Mucosa of descending colon (tissue), 3 donors: ENCODE measurements at regions of chr12 and their contacts with region 1.

Region 1: GRCh38 chr12:123232807-123233543 is at the starts of genes MPHOSPH9 and MTRFR:
- DNase-seq: peak; percentile 98 to 99 (median 98)
- ATAC-seq: peak; percentile 98
- H3K4me3 ChIP-seq: peak within 1 kb of the TSS; percentile 58
- H3K4me1 ChIP-seq: peaks cover 20% of the 10 kb centered on the region
- CTCF ChIP-seq: peak; percentile 8
- total RNA-seq, gene MPHOSPH9: 19.6 to 28.7 (median 19.8) TPM
- total RNA-seq, gene MTRFR: 9.0 to 11.2 (median 10.4) TPM

Region 2: GRCh38 chr12:122860346-122861090 is 372.5 kb before region 1 on chr12:
- intact Hi-C with region 1: loop called in 1 of 2 experiments (anchors 10 kb)
- DNase-seq: peak; percentile 89 to 93 (median 90)
- ATAC-seq: peak; percentile 66
- H3K4me3 ChIP-seq: no peak overlapping the region
- H3K4me1 ChIP-seq: peaks cover 18% of the 10 kb centered on the region
- CTCF ChIP-seq: peak; percentile 72

Region 3: DNA sequence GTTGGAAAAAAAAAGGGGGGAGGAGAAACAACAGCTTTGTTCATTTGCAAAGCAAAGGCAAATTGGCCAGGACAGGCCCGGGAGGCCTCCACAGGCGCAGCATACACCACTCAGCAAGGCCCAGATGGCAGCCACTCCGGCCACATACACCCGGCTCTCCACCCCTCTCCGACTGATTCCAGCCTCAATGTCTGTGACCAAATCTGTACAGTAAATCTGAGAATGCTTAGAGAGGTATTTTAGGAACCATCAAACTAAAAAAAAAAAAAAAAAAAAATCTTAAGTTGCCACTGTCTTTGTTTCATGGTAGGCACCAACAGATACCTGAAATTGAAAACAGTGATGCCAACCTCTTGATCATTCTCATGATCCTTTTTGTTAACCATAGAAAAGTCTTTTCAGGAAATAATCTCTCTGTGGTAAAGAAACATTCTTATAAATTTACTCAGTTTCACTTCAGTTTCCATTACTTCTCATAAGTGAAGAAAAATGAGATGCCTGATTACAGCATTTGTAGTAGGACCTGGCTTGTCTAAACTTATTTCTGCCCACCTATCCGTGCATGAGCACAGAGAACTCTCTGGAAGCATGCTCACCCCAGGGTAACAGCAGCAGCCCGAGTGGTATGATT is 357.3 kb before region 1 on chr12:
- intact Hi-C with region 1: no loop called
- DNase-seq: peak in 2 of 3 donors; percentile 42 to 64
- ATAC-seq: no peak
- H3K4me3 ChIP-seq: no peak overlapping the region
- H3K4me1 ChIP-seq: peaks cover 58% of the 10 kb centered on the region
- CTCF ChIP-seq: no peak

Region 4: GRCh38 chr12:123141615-123142517 is 91.1 kb before region 1 on chr12:
- intact Hi-C with region 1: no loop called
- DNase-seq: peak; percentile 81 to 86 (median 84)
- ATAC-seq: peak; percentile 86
- H3K4me3 ChIP-seq: no peak overlapping the region
- H3K4me1 ChIP-seq: peaks cover 46% of the 10 kb centered on the region
- CTCF ChIP-seq: no peak